Activated CD8-positive, alpha-beta T cell treated with anti-CD3 and anti-CD28 coated beads for 36 hours (primary cell): ENCODE measurements at regions of chr19 and their contacts with region 1.

Region 1: DNA sequence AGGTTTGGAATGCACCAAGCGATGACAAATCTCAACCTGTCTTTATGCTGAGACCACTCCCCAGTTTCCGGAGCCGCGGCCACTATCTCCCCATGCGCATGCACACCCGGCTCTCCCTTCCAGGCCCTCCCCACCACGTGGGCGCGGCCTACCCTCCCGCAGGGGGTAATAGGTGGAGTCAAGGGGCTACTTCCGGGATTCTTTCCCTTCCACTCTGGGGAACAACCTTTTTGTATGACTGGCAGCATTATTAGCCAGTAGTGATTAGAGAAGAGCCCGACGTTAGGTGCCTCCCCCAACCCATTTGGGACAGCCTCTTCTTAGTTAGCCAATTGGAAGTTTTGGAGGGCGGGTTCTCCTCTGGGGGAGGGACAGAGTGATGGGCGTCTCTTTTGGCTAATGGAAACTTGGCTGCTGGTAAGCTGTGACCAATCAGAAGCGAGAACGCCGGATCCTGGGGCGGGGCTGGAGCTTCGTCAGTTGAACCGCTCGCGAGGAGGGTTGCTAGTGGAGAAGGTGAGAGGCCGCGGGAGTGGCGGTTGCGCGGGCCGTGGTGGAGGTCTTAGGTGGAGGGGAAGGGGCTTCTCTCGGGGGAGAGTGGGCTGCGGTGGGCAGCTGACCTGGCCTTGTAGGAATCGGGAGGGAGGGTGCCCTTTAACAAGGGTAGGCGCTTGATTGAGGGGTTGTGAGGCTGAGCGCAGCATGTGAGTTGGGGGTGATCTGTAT is at the start of gene CCDC61:
- DNase-seq: peak; percentile 97
- ATAC-seq: peak; percentile 98
- H3K4me3 Mint-ChIP-seq: no peak within 1 kb of the TSS
- H3K27ac Mint-ChIP-seq: no peak within 1 kb of the TSS
- H3K4me1 Mint-ChIP-seq: peaks cover 32% of the 10 kb centered on the region
- H3K27me3 Mint-ChIP-seq: peaks cover 3% of the 10 kb centered on the region
- CTCF ChIP-seq: no peak
- total RNA-seq, gene CCDC61: 26.9 to 29.2 TPM

Region 2: DNA sequence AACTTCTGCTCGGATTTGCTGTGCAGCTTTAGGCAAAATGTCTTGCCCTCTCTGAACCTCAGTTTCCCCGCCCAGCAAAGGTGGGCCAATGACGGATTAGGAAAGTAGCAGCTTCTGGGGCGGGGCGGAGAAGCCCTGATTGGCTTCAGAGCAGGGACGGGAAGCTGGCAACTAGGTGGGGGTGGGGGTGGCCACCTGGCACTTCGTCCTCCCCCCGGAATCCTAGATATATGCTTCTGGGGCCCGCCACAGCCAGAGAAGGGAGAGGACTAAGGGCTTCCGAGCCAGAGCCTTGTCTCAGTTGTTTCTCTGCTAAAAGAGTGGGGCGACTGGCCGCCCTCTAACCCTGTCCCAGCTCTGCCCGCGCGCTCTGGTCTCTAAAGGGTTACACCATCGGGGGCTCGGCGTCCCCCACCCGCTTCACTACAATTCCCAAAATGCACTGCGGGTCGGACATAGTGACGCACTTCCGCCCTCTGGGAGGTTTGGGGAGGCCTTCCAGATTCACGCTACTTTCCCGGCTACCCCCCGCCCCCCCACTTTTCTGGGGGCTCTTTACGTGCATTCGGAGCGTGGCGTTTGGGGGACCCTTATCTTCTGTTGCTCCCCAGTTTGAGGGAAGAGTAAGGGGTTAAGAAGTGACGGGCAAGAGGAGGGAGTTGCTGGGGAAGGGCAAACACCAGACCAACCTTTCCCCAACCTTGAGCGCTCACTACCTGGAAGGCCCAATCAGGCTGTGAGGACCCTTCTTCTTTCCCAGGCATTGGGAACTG is 108.5 kb before region 1 on chr19:
- CTCF ChIA-PET with region 1: interaction called, 4 read pairs
- POLR2A ChIA-PET with region 1: interaction called, 13 read pairs
- intact Hi-C with region 1: no loop called
- DNase-seq: peak; percentile 98
- ATAC-seq: peak; percentile 85
- H3K4me3 Mint-ChIP-seq: peak overlapping the region; percentile 84
- H3K27ac Mint-ChIP-seq: peak overlapping the region; percentile 92
- H3K4me1 Mint-ChIP-seq: peaks cover 16% of the 10 kb centered on the region
- H3K27me3 Mint-ChIP-seq: no peaks in the 10 kb centered on the region
- CTCF ChIP-seq: no peak

Region 3: GRCh38 chr19:46009530-46010510 is 14.7 kb after region 1 on chr19:
- CTCF ChIA-PET with region 1: interaction called, 12 read pairs
- POLR2A ChIA-PET with region 1: interaction called, 7 read pairs
- intact Hi-C with region 1: no loop called
- DNase-seq: peak; percentile 82
- ATAC-seq: peak; percentile 94
- H3K4me3 Mint-ChIP-seq: no peak overlapping the region
- H3K27ac Mint-ChIP-seq: no peak overlapping the region
- H3K4me1 Mint-ChIP-seq: peaks cover 5% of the 10 kb centered on the region
- H3K27me3 Mint-ChIP-seq: peaks cover 6% of the 10 kb centered on the region
- CTCF ChIP-seq: peak; percentile 80

Region 4: GRCh38 chr19:46030812-46031550 is 35.8 kb after region 1 on chr19:
- CTCF ChIA-PET with region 1: interaction called, 14 read pairs
- POLR2A ChIA-PET with region 1: no interaction called
- intact Hi-C with region 1: no loop called
- DNase-seq: no peak
- ATAC-seq: no peak
- H3K4me3 Mint-ChIP-seq: no peak overlapping the region
- H3K27ac Mint-ChIP-seq: no peak overlapping the region
- H3K4me1 Mint-ChIP-seq: peaks cover 12% of the 10 kb centered on the region
- H3K27me3 Mint-ChIP-seq: peaks cover 19% of the 10 kb centered on the region
- CTCF ChIP-seq: no peak